Caco-2 (cell line): ENCODE measurements at regions of chr13 and their contacts with region 1.

Region 1: GRCh38 chr13:88068975-88069374 is 397.8 kb downstream of the SLITRK5 start:
- DNase-seq: peak; percentile 54 to 57
- H3K4me3 ChIP-seq: no peak overlapping the region
- H3K4me3 Mint-ChIP-seq: no peak overlapping the region
- H3K27ac Mint-ChIP-seq: no peak overlapping the region
- H3K4me1 ChIP-seq: no peaks in the 10 kb centered on the region
- H3K4me1 Mint-ChIP-seq: no peaks in the 10 kb centered on the region
- H3K27me3 ChIP-seq: no peaks in the 10 kb centered on the region
- H3K27me3 Mint-ChIP-seq: no peaks in the 10 kb centered on the region
- CTCF ChIP-seq: peak; percentile 17 to 34

Region 2: DNA sequence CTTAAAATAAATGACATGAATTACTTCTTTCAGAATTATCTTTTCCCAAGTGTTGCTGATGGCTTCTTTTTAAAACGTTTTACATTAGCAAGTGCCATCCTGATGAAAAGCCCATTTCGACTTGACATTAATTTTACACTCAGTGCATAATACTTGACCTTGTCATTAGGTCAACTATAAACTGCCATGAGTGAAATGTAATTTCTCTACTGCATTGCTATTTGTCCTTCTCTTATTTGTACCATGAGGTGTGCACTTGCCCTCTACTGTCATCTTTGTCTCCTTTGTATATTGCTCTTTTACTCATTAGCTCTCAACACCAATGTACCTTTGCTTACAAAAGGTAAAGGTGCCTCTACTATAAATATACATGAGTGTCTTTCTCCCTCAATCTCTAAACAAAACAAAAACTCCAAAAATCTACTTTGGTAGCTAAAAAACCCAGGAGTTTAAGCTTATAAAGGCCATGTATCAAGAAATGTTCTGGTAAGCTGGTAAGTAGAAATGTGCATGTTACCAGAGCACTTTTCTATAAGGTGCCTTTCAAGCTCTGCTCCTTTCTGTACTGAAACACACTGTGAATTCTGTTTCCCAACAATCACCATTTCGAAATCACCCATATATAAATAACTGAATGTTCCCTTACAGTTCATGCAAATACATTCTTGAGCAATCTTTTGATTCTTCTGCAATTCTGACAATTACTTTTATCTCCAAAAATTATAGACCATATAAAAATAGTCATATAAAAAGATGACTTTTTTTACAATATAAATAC is 46.4 kb before region 1 on chr13:
- CTCF ChIA-PET with region 1: no interaction called
- POLR2A ChIA-PET with region 1: no interaction called
- intact Hi-C with region 1: no loop called
- DNase-seq: no peak
- H3K4me3 ChIP-seq: no peak overlapping the region
- H3K4me3 Mint-ChIP-seq: no peak overlapping the region
- H3K27ac Mint-ChIP-seq: no peak overlapping the region
- H3K4me1 ChIP-seq: no peaks in the 10 kb centered on the region
- H3K4me1 Mint-ChIP-seq: no peaks in the 10 kb centered on the region
- H3K27me3 ChIP-seq: no peaks in the 10 kb centered on the region
- H3K27me3 Mint-ChIP-seq: no peaks in the 10 kb centered on the region
- CTCF ChIP-seq: no peak

Region 3: DNA sequence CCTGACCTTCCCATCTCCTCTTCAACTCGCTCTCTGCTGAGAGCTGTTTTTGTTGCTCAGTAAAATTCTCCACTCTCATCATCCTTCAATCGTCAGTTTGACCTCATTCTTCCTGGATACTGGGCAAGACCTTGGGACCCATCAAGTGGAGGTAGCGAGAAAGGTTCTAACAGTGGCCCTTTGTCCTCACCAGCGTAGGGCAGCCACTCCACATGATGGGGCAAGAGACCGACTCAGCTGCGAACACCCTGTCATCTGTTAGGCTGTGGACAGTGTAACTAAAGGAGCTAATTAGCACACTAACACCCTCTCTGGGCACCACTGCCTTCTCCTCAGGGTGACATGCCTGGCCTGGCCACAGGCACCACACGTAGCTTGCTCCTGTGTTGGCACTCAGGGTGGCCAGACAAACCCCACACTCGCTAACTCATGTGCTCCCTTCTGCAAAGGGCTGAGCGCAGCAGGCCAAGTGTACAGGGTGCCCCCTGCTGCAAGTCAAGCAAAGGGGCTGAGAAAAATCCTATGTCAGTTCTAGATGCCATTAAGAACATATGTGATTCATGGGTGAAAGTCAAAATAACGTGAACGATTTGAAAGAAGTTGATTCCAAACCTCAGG is 818.2 kb after region 1 on chr13:
- CTCF ChIA-PET with region 1: no interaction called
- POLR2A ChIA-PET with region 1: no interaction called
- intact Hi-C with region 1: loop called (anchors 5 kb)
- DNase-seq: peak in 1 of 2 experiments; percentile 7
- H3K4me3 ChIP-seq: no peak overlapping the region
- H3K4me3 Mint-ChIP-seq: no peak overlapping the region
- H3K27ac Mint-ChIP-seq: no peak overlapping the region
- H3K4me1 ChIP-seq: no peaks in the 10 kb centered on the region
- H3K4me1 Mint-ChIP-seq: no peaks in the 10 kb centered on the region
- H3K27me3 ChIP-seq: no peaks in the 10 kb centered on the region
- H3K27me3 Mint-ChIP-seq: no peaks in the 10 kb centered on the region
- CTCF ChIP-seq: peak in 1 of 2 experiments; percentile 42

Region 4: GRCh38 chr13:89066868-89067466 is 998.0 kb after region 1 on chr13:
- CTCF ChIA-PET with region 1: no interaction called
- POLR2A ChIA-PET with region 1: no interaction called
- intact Hi-C with region 1: loop called (anchors 1 kb)
- DNase-seq: peak; percentile 32 to 61
- H3K4me3 ChIP-seq: no peak overlapping the region
- H3K4me3 Mint-ChIP-seq: no peak overlapping the region
- H3K27ac Mint-ChIP-seq: no peak overlapping the region
- H3K4me1 ChIP-seq: no peaks in the 10 kb centered on the region
- H3K4me1 Mint-ChIP-seq: no peaks in the 10 kb centered on the region
- H3K27me3 ChIP-seq: no peaks in the 10 kb centered on the region
- H3K27me3 Mint-ChIP-seq: no peaks in the 10 kb centered on the region
- CTCF ChIP-seq: peak; percentile 45 to 60